Heart right ventricle (tissue), 16 donors: ENCODE measurements at regions of chr13 and their contacts with region 1.

Region 1: DNA sequence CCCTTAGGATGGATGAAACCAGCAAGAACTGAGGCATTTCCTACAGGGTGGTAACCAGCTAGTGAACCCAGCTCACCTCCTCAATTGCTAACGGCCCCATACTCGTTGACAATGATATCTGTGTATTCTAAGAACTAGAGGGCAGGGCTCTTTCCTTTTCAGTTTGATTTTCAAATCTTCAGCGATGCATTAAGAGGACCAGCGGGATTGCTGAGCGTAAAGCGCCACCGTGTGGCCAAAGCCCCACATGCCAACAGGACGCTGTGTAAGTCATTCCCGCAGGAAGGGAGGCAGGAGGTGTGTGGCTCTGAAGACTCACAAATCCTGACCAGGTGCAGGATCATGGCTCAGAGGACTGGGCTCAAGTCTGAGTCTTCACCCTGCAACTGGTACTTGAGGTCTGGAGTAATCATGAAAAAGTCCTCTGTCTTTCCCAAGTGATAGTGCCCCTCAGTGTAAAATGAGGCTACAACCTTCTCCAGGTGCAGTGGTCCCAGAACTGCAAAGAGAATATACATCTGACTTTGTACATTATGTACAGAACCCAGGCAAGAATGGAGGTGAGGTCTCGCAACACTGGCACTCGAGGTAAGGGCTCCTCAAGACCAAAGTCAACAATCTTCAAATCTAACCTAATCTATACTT is 40.9 kb downstream of the C13orf42 start:
- DNase-seq: peak; percentile 80 to 82
- ATAC-seq: peak; percentile 68 to 86 (median 80)
- H3K4me3 ChIP-seq: no peak overlapping the region
- H3K27ac ChIP-seq: no peak overlapping the region
- H3K4me1 ChIP-seq: peaks cover 0 to 49% (median 19%) of the 10 kb centered on the region in 9 donors
- H3K27me3 ChIP-seq: peaks cover 0 to 8% (median 0%) of the 10 kb centered on the region in 7 donors
- CTCF ChIP-seq: peak; percentile 90 to 98 (median 94)

Region 2: DNA sequence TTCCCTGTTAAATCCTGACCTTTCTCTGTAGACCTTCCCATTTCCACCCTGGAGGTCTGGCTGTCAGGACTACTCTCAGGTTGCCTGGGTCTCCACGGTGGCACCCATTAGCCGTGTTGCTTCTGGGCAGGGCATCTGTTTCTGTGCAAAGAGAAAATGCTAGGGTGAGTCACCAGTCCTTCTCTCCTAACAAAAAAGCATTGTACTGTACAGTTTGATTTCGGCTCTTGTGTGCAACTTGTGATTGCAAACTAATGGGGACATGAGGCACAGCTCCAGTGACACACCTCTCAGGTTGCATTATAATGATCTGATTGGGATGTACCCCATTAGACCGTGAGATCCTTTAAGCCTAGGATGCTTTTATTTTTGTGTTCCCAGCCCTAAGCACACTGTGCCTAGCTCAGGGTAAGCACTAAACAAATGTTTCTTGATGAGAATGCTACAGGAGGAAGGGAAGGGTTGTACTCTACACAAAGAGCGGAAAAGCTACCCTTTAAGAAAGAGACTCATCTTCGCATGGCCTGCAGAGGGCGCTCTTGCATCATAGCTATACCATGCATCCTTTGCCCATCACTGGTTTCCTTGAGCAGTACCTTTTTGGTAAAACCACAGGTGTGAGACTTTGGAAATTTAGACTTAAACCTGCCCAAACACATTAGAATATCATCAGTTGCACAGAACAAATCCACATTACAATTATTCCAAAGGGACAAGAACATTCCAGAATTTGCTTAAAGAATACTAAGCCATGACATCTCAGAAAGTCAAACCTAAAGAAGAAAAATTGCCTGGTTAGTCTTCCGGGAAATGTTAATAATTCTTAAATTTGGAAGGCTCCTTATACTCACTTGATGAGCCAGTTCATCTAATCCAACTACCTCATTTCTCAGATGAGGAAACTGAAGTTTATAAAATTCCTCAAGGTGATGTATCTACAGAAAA is 1093.5 kb before region 1 on chr13:
- intact Hi-C with region 1: loop called in 6 of 10 experiments (anchors 5 to 10 kb)
- DNase-seq: peak; percentile 57 to 71
- ATAC-seq: peak; percentile 64 to 85 (median 80)
- H3K4me3 ChIP-seq: no peak overlapping the region
- H3K27ac ChIP-seq: no peak overlapping the region
- H3K4me1 ChIP-seq: peaks cover 0 to 5% (median 0%) of the 10 kb centered on the region in 9 donors
- H3K27me3 ChIP-seq: no peaks in the 10 kb centered on the region
- CTCF ChIP-seq: peak; percentile 71 to 94 (median 87)

Region 3: DNA sequence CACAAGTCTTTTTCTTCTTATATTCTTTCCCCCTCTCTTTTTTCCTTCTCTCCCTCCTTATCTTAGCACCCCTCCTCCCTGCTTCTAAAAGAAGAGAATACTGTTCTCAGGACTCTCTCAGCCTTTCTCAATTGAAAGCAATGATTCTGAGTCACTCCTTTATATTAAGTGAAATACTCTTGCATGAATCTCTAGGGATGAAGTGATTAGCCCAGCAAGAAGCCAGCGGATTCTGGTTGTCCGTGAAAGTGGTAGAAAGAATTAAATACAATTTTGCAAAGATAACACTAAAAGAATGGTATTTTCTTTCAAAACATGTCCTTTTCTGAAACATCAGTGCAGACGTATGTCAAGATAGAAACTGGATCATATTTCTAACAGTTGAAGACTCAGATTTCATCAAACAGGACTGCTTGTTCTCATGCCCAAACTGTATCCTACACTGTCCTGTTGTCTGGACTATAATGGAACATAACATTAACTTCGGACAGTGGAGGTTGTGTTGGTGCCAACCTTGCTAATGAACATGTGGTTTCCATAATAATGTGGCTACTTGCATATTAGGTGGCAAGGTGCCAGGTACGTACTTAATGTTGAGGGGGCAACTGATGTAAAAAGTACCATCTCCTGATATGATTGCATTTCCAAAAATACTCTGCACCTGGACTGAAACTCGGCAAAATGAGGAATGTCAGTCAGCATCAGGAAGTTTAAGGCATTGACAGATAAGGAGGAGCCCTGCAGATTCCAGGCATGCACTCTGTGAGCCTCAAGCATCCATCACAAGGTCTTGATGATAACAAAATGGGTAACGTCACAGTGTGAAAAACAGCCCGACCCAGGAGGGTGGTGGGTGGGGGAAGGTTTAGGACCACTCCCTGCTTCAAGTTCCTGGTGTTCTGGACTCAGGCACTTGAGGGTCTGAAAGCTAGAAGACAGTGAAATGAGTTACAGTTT is 583.9 kb before region 1 on chr13:
- intact Hi-C with region 1: no loop called
- DNase-seq: no peak
- ATAC-seq: peak in 2 of 8 donors; percentile 25 to 37
- H3K4me3 ChIP-seq: no peak overlapping the region
- H3K27ac ChIP-seq: no peak overlapping the region
- H3K4me1 ChIP-seq: peaks cover 0 to 20% (median 4%) of the 10 kb centered on the region in 9 donors
- H3K27me3 ChIP-seq: no peaks in the 10 kb centered on the region
- CTCF ChIP-seq: no peak

Region 4: DNA sequence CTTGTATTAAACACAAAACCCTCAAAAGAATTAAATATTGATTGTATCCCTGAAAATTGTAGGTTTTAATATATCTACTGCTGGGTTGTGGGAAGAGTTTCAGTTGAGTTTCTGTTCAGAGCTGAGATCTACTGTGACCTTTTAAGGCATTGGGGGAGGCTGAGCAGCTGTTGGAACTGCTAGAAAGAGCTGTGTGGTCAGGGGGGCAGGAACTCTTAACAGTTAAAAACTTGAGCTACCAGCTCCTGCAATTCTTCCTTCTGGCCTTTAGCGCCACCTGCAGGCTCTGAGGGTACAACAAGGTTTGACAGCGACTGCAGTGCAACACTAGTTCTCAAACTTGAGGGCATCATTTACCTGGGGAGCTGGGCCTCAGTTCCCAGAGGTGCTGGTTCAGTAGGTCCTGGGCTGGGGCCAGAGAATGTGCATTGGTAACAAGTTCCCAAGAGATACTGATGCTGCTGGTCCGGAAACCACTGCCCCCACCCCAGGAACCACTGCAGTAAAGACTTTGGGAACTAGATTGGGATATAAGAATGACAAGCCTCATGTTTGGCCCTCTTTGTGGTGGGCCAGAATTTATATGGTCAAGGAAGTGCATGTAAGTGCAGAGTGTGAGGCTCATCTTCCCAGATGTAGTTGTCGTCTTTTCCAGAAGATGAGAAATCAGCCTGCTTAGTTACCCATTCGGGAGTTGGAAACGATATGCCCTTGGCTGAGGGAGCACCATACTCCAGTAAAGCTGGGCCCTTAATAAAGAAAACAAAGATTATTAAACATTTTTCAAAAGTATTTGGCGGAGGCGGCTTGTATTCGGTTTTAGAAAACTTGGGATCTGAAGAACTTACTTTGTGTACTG is 158.0 kb before region 1 on chr13:
- intact Hi-C with region 1: loop called in 2 of 10 experiments (anchors 5 kb)
- DNase-seq: peak; percentile 87 to 89
- ATAC-seq: peak in 7 of 8 donors; percentile 14 to 69 (median 49)
- H3K4me3 ChIP-seq: peak overlapping the region in 1 of 10 donors; percentile 86
- H3K27ac ChIP-seq: peak overlapping the region in 6 of 10 donors; percentile 20 to 96 (median 69)
- H3K4me1 ChIP-seq: peaks cover 8 to 75% (median 56%) of the 10 kb centered on the region in 9 donors
- H3K27me3 ChIP-seq: no peaks in the 10 kb centered on the region
- CTCF ChIP-seq: peak; percentile 65 to 91 (median 87)

Region 5: DNA sequence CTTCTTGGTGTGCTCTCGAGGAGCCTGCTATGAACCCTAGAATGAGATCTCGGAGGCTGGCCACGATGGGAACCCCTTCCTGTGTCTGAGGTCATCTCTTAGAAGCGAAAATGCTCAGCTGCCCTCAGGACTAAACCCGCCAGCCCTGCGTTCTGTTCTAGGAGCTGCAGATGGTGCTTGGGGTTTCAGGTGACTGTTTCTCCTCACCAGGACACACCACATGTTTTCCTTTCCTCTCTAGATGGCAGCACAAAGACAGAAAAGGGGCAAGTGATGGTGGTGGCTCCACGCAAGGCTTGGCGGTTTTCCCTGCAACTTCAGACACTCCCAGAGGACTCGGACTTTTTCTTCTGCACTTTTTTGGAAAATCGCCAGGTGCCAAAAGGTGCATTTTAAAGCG is 100.4 kb before region 1 on chr13:
- intact Hi-C with region 1: loop called in 4 of 10 experiments (anchors 5 to 10 kb)
- DNase-seq: no peak
- ATAC-seq: peak in 2 of 8 donors; percentile 30 to 33
- H3K4me3 ChIP-seq: no peak overlapping the region
- H3K27ac ChIP-seq: no peak overlapping the region
- H3K4me1 ChIP-seq: no peaks in the 10 kb centered on the region
- H3K27me3 ChIP-seq: no peaks in the 10 kb centered on the region
- CTCF ChIP-seq: peak in 5 of 9 donors; percentile 9 to 34 (median 20)

Region 6: DNA sequence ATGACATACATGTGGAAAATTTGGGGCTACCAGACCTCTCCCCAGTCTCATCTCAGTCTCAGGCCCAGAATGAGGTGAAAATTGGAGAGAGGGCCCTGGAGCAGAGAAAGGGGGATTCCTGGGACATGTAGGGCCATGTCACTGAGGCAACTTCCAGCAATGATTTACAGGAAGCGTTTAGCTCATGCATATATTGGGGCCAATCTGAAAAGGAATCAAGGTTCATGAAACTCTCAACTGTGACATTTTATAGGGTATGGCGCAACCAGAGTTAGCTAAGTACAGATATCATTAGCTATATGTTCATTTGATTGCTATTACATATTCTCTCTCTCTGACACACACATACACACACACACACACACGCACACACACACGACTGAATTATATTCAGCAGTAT is 74.3 kb before region 1 on chr13:
- intact Hi-C with region 1: loop called in 1 of 10 experiments (anchors 2 kb)
- DNase-seq: no peak
- ATAC-seq: no peak
- H3K4me3 ChIP-seq: no peak overlapping the region
- H3K27ac ChIP-seq: no peak overlapping the region
- H3K4me1 ChIP-seq: peaks cover 0 to 40% (median 30%) of the 10 kb centered on the region in 9 donors
- H3K27me3 ChIP-seq: no peaks in the 10 kb centered on the region
- CTCF ChIP-seq: no peak